Activated CD4-positive, alpha-beta memory T cell treated with anti-CD3 and anti-CD28 coated beads for 36 hours (primary cell): ENCODE measurements at regions of chr14 and their contacts with region 1.

Region 1: GRCh38 chr14:50954811-50955372 is 10.6 kb upstream of the PYGL start:
- DNase-seq: no peak
- H3K4me3 Mint-ChIP-seq: no peak overlapping the region
- H3K27ac Mint-ChIP-seq: no peak overlapping the region
- H3K4me1 Mint-ChIP-seq: peaks cover 11% of the 10 kb centered on the region
- H3K27me3 Mint-ChIP-seq: no peaks in the 10 kb centered on the region

Region 2: DNA sequence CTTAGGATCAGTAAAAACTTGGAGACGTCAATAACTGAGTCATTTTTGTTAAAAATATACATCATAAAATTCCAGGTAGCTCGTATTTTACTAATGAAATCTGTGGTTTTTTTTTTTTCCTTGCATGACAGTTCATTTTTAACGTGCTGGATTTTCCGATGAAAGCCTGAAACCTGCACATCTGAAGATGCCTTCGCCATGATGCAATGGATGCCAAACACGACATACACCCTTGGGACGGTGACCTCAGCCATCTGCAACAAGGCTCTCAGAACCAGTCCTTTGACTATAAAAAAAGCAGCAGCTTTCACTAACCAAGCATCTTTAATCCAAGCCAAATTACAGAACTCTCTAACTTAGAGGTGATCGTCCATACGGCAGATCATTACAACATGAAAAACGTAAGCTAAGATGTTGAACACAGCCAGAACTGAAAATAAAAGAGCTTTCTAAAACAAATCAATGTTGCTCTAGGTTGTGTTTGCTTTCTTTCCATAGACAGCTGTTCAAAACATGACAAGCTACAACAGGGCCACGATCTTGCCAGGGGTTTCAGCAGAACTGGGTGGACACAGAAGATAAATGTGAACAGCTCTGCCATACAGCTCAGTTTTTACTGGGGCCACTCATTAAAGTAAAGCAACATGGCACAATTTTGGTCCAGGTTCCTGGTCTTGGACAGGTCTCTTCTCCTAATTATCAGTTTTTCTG is 131.7 kb before region 1 on chr14:
- CTCF ChIA-PET with region 1: no interaction called
- POLR2A ChIA-PET with region 1: no interaction called
- intact Hi-C with region 1: loop called (anchors 5 kb)
- DNase-seq: no peak
- H3K4me3 Mint-ChIP-seq: peak overlapping the region; percentile 21
- H3K27ac Mint-ChIP-seq: peak overlapping the region; percentile 70
- H3K4me1 Mint-ChIP-seq: peaks cover 77% of the 10 kb centered on the region
- H3K27me3 Mint-ChIP-seq: no peaks in the 10 kb centered on the region

Region 3: DNA sequence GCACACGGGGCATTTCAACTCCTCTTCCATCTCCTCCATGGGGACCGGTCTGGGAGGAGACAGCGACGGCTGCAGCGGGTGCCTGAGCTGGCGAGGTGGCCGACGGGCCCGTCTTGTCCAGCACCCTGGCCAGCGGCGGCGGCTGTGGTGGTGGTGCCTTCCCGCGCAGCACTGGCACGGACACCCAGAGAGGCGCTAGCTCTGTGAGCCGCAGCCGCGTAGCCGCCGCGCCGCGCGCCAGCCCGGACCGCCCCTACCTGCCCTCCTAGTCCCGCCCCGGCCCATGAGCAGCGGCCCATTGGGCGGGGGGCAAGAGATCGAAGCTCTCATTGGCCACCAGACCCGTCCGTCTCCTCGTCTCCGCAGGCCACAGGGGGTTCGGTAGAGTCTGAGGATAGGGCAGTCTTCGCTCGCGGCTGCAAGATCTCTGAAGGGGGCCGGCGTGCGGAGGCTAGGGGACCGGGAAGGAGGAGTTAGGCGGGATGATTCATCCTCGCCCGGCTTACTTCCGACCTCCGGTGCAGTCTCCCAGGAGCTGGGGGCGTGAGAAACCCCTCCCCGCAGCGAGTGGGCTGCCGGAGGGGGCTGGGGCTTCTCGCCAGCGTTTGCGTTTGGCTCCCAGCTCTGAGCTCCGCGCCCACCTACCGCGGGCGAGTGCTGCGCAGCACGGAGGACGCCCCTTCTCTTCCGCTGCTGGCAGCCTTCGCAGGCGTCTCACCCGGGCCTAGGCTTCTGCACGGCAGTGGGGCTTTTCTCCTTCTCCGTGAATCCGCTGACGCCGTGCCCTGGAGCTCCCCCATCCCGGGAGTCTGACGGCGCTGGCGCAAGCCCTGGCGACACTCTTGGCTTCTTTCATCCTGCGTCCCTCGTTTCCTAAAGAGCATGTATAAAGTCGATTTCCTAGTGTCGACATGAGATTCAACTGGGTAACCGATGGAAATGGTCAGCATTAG is 140.3 kb after region 1 on chr14 and contains the start of gene TRIM9:
- CTCF ChIA-PET with region 1: no interaction called
- POLR2A ChIA-PET with region 1: interaction called, 3 read pairs
- intact Hi-C with region 1: loop called (anchors 5 kb)
- DNase-seq: peak; percentile 95
- H3K4me3 Mint-ChIP-seq: peak within 1 kb of the TSS; percentile 81
- H3K27ac Mint-ChIP-seq: peak within 1 kb of the TSS; percentile 33
- H3K4me1 Mint-ChIP-seq: peaks cover 10% of the 10 kb centered on the region
- H3K27me3 Mint-ChIP-seq: peaks cover 22% of the 10 kb centered on the region
- total RNA-seq, gene TRIM9: 0.36 to 0.40 TPM